OCI-LY7 (cell line): ENCODE measurements at regions of chr4 and their contacts with region 1.

Region 1: DNA sequence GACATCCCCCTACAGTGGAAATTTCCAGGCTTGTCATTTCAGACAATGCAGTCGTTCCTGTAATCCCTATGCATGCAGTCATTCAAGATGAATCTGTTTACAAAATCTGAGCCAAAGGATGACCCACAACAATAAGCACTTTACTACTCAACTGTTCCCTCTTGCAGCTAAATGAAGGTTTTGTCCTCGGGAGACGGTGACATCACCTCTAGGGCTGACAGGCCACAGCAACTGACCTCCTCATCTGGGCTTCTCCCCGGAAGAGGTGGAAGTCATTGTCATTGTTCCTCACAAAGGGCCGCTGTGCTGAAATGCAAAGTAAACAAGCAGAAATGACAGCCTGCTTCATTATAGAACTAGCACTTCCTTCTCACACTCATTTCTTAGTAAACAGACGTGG is 29.2 kb downstream of the CLRN2 start:
- DNase-seq: no peak
- H3K4me3 ChIP-seq: no peak overlapping the region
- H3K27ac ChIP-seq: no peak overlapping the region
- H3K4me1 ChIP-seq: no peaks in the 10 kb centered on the region
- CTCF ChIP-seq: no peak

Region 2: DNA sequence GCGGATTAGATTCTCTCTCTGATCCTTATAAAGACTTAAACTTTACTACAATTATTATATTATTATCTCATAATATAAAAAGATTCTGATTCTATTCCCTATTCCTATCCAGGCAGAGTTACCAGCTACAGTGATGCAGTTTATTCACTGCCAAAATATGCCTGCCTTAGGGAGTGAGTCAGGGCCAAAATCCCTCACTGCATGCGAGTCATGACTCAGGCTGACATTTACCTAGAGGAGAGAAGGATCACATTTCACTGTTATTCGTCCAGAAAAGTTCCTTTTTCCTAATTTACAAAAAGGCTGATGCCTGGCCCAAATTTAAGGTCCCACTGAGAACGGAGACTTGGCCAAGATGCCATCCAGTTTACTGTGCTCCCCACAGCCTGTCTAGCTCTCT is 477.2 kb before region 1 on chr4:
- CTCF ChIA-PET with region 1: no interaction called
- POLR2A ChIA-PET with region 1: no interaction called
- intact Hi-C with region 1: no loop called
- DNase-seq: no peak
- H3K4me3 ChIP-seq: no peak overlapping the region
- H3K27ac ChIP-seq: no peak overlapping the region
- H3K4me1 ChIP-seq: no peaks in the 10 kb centered on the region
- CTCF ChIP-seq: no peak

Region 3: DNA sequence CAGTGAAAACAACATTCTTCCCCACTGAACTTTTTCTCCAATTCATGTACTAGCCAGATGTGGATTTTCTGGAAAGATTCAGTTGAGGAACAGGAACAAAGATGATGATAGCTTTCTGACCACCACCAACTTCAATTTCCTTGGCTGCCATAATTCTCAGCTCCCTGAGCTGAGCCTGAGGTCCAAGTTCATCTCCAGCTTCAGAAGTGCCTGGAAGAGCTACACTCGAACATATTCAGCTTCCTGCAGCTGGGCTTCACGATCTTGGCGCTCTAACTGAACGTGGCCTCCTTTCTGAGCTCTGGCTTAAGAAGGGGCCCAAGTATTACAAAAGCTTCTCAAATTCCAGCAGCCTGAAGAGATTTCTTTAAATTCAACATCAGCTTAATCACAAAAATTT is 116.2 kb before region 1 on chr4:
- CTCF ChIA-PET with region 1: no interaction called
- POLR2A ChIA-PET with region 1: no interaction called
- intact Hi-C with region 1: no loop called
- DNase-seq: no peak
- H3K4me3 ChIP-seq: no peak overlapping the region
- H3K27ac ChIP-seq: no peak overlapping the region
- H3K4me1 ChIP-seq: no peaks in the 10 kb centered on the region
- CTCF ChIP-seq: no peak

Region 4: DNA sequence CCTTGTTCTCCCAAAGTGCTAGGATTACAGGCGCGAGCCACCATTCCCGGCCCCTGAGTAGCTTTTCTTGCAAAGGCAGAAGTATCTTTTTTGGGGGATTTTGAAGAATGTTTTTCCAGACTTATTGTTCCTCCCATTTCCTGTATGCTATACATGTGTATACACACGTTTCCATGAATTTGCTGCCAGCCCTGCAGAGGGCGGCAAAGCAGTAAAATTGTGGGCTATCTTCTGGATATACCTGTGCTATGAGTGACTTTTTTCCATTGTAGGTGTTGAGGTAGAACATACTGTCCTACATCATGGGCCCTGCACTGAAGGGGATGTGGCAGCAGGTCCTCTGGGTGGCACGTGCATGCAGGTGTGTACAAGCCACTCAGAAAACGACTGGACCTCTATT is 53.3 kb after region 1 on chr4:
- CTCF ChIA-PET with region 1: no interaction called
- POLR2A ChIA-PET with region 1: no interaction called
- intact Hi-C with region 1: loop called (anchors 5 kb)
- DNase-seq: no peak
- H3K4me3 ChIP-seq: no peak overlapping the region
- H3K27ac ChIP-seq: no peak overlapping the region
- H3K4me1 ChIP-seq: peaks cover 36% of the 10 kb centered on the region
- CTCF ChIP-seq: peak; percentile 63

Region 5: GRCh38 chr4:17636696-17637622 is 92.8 kb after region 1 on chr4:
- CTCF ChIA-PET with region 1: interaction called, 3 read pairs
- POLR2A ChIA-PET with region 1: interaction called, 8 read pairs
- intact Hi-C with region 1: loop called (anchors 1 kb)
- DNase-seq: peak; percentile 81
- H3K4me3 ChIP-seq: no peak overlapping the region
- H3K27ac ChIP-seq: no peak overlapping the region
- H3K4me1 ChIP-seq: no peaks in the 10 kb centered on the region
- CTCF ChIP-seq: peak; percentile 88

Region 6: GRCh38 chr4:17786567-17786966 is 242.4 kb after region 1 on chr4:
- CTCF ChIA-PET with region 1: no interaction called
- POLR2A ChIA-PET with region 1: no interaction called
- intact Hi-C with region 1: loop called (anchors 5 kb)
- DNase-seq: peak; percentile 14
- H3K4me3 ChIP-seq: no peak overlapping the region
- H3K27ac ChIP-seq: no peak overlapping the region
- H3K4me1 ChIP-seq: peaks cover 13% of the 10 kb centered on the region
- CTCF ChIP-seq: no peak

Region 7: DNA sequence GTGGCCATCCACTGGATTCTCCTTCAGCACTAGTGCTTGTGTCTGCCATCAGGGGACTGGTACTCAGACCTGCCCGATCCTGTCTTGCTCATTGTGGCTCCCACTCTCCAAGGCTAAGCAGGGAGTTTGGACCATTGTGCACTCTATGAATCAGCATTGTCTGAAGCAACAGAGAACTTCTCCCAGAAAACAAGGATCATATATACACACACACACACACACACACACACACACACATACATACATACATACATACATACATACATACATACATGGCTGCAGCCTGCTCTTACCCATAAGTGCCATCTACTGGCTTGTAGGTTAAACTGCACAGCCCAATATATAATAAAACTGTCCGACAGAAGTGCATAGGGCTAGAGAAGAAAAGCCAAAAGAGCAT is 822.7 kb after region 1 on chr4:
- CTCF ChIA-PET with region 1: no interaction called
- POLR2A ChIA-PET with region 1: no interaction called
- intact Hi-C with region 1: loop called (anchors 5 kb)
- DNase-seq: peak; percentile 39
- H3K4me3 ChIP-seq: no peak overlapping the region
- H3K27ac ChIP-seq: no peak overlapping the region
- H3K4me1 ChIP-seq: no peaks in the 10 kb centered on the region
- CTCF ChIP-seq: peak; percentile 81